Activated naive CD4-positive, alpha-beta T cell treated with anti-CD3 and anti-CD28 coated beads for 36 hours (primary cell): ENCODE measurements at regions of chr1 and their contacts with region 1.

Region 1: DNA sequence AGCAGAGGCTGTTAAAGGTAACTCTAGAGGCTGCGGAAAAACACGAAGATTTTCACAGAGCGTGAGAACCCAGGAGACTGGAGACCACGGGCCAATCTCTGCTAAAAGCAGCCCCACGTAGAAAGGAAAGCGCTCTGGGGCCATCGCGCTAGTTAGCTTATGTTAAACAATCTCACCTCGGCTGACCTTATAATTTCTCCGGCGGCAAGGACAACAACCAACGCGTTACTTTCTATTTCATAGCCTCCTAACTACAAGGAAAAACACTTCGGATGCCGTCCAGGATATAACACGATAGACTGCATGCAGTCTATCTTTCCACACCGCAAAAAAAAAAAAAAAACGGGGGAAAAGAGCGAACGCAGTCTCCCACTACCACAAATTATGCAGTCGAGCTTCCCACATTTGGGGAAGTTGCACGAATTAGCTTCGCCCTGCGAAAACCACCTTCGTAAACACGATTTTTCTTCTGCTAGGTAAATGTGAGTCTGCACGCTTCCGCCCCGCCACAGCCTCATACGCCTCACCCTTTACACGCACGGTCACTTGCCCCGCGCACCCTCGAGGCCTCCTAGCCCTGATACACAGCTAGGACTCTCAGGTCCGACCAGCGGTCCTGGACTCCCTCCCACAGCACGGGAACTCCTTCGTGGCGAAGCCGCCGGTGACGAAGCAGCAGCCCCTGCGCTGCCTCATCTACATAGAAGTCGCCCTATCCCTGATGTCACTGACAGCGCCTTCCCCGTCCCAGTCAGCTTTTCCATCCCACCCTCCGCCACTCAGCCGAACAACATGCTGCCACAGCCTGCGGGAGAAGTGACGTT is 87.8 kb downstream of the PRKAB2 start:
- DNase-seq: peak; percentile 96
- H3K4me3 Mint-ChIP-seq: peak overlapping the region; percentile 92
- H3K27ac Mint-ChIP-seq: peak overlapping the region; percentile 100
- H3K4me1 Mint-ChIP-seq: peaks cover 44% of the 10 kb centered on the region
- H3K27me3 Mint-ChIP-seq: peaks cover 35% of the 10 kb centered on the region

Region 2: GRCh38 chr1:147046189-147046862 is 38.2 kb before region 1 on chr1:
- CTCF ChIA-PET with region 1: interaction called, 5 read pairs
- intact Hi-C with region 1: loop called (anchors 1 kb)
- DNase-seq: no peak
- H3K4me3 Mint-ChIP-seq: no peak overlapping the region
- H3K27ac Mint-ChIP-seq: peak overlapping the region; percentile 82
- H3K4me1 Mint-ChIP-seq: peaks cover 40% of the 10 kb centered on the region
- H3K27me3 Mint-ChIP-seq: no peaks in the 10 kb centered on the region

Region 3: DNA sequence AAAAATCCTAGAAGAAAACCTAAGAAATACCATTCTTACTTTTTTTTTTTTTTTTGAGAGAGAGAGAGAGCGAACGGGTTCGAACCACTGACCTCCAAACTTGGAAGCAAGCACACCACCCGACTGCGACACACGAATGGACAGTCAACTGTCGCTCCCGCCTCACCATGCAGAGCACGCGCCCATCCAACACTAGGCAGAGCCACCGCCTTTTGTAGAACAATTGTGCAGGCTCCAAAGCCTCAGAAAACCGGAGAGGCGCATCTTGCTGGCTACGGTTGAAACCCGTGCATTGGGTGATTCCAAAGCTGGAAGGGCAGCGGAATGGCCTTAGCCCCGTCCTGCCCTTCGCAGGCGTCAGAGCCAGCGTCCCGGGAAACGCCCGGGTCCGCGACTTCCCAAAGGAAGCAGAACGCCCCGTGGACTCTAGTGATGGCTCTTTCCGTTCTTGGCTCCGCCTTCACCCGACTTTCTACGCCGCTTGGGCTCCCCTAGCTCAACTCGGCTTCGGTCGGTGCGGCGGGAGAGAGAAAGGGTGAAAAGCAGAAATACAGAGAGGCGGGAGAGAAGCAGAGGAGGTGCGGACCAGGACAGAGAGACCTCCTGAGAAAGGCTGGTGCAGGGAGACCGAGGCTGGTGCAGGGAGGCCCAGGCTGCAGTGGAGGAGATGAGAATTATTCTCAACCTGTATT is 12.0 kb before region 1 on chr1:
- CTCF ChIA-PET with region 1: no interaction called
- intact Hi-C with region 1: loop called (anchors 1 kb)
- DNase-seq: peak; percentile 42
- H3K4me3 Mint-ChIP-seq: peak overlapping the region; percentile 84
- H3K27ac Mint-ChIP-seq: peak overlapping the region; percentile 39
- H3K4me1 Mint-ChIP-seq: peaks cover 30% of the 10 kb centered on the region
- H3K27me3 Mint-ChIP-seq: peaks cover 37% of the 10 kb centered on the region

Region 4: DNA sequence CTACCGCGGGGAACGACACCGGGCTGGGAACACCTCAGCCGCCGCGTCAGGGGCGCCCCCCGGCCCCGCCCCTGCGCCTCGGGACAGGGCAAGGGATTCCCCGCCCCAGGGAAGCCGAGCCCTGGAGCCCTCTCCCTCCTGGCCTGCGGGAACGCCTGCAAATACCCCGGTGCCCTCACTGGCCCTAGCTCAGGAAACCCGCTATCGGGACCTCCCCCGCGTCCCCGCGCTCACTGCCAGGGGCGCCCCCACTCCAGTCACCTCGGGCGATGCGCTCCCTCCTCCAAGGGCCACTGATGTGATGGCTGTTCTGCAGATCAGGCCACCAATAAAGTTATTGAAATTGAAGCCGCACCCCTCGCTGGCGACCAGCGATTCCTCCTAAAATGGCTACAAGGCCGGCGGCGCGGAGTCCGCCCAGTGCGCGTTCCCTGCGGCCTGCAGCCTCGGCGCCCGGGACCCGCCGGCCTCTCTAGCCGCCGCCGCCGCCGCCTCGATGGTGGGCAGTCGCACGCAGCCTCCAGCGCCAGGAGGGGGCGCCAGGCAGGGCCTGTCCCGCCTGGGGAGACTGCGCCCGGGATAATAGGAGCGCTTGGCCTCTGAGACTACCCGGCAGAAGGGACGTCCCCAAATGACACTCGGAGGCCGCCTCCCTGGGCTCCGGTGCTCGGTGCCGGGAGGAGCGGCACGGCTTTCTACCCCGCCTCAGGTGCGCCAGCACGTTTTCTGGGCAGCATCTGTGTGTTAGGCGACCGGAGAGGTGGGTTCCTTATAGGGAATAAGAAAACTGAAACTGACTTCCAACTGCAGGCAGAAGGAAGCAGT is 87.9 kb after region 1 on chr1 and contains the start of gene PRKAB2:
- CTCF ChIA-PET with region 1: no interaction called
- intact Hi-C with region 1: loop called (anchors 1 kb)
- DNase-seq: peak; percentile 91
- H3K4me3 Mint-ChIP-seq: peak within 1 kb of the TSS; percentile 98
- H3K27ac Mint-ChIP-seq: peak within 1 kb of the TSS; percentile 96
- H3K4me1 Mint-ChIP-seq: peaks cover 32% of the 10 kb centered on the region
- H3K27me3 Mint-ChIP-seq: peaks cover 1% of the 10 kb centered on the region
- total RNA-seq, gene PRKAB2: 3.4 to 4.4 TPM

Region 5: GRCh38 chr1:147242439-147243227 is 158.1 kb after region 1 on chr1 and contains the start of gene CHD1L:
- CTCF ChIA-PET with region 1: interaction called, 4 read pairs
- intact Hi-C with region 1: loop called (anchors 1 kb)
- DNase-seq: peak; percentile 96
- H3K4me3 Mint-ChIP-seq: peak within 1 kb of the TSS; percentile 85
- H3K27ac Mint-ChIP-seq: peak within 1 kb of the TSS; percentile 39
- H3K4me1 Mint-ChIP-seq: peaks cover 35% of the 10 kb centered on the region
- H3K27me3 Mint-ChIP-seq: no peaks in the 10 kb centered on the region
- total RNA-seq, gene CHD1L: 54.8 to 56.8 TPM